ENCODE measurements at regions of chr11 and their contacts with region 1.

Region 1: DNA sequence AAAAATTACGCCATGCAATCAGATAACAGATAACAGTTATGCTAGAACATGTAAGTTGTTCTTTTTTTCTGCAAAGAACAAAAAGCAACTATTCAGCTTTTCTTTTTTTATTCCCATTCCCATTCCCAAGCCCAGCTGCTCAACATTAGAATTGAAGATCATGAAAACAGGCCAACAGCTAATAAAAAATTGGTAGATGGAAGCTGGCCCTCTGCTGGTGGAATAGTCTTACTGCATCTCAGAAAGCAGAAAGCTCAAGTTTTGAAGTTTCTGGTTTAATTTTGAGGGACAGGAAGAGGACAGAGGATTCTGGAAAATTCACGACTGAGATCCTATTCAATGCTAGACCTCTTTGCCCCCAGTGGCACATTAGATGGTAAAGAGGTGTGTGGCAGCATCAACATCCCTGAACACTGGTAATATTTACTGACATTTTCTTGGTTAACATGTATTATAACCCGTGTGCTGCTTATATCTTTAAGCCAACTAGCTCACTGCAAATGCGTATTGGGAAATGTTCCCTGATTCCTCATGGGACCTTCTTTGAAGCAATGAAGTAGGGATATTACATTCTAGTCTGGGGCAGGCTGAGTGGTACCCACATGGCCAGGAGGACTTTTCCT is 591.2 kb downstream of the OPCML start:
- DNase-seq: no peak
- H3K4me3 ChIP-seq: no peak overlapping the region
- H3K27ac ChIP-seq: no peak overlapping the region
- H3K4me1 ChIP-seq: no peaks in the 10 kb centered on the region
- H3K27me3 ChIP-seq: peaks cover 7% of the 10 kb centered on the region
- CTCF ChIP-seq: peak; percentile 53

Region 2: GRCh38 chr11:131748151-131749050 is 1192.7 kb before region 1 on chr11:
- intact Hi-C with region 1: loop called (anchors 5 kb)
- DNase-seq: peak; percentile 48
- H3K4me3 ChIP-seq: no peak overlapping the region
- H3K27ac ChIP-seq: no peak overlapping the region
- H3K4me1 ChIP-seq: no peaks in the 10 kb centered on the region
- H3K27me3 ChIP-seq: no peaks in the 10 kb centered on the region
- CTCF ChIP-seq: peak; percentile 49

Measured in colonic mucosa (tissue), 4 donors.